Left cardiac atrium (tissue), 4 donors: ENCODE measurements at regions of chr12 and their contacts with region 1.

Region 1: GRCh38 chr12:29317556-29318363 is 63.2 kb downstream of the ERGIC2 start:
- DNase-seq: peak; percentile 58
- ATAC-seq: peak; percentile 93 to 95

Region 2: DNA sequence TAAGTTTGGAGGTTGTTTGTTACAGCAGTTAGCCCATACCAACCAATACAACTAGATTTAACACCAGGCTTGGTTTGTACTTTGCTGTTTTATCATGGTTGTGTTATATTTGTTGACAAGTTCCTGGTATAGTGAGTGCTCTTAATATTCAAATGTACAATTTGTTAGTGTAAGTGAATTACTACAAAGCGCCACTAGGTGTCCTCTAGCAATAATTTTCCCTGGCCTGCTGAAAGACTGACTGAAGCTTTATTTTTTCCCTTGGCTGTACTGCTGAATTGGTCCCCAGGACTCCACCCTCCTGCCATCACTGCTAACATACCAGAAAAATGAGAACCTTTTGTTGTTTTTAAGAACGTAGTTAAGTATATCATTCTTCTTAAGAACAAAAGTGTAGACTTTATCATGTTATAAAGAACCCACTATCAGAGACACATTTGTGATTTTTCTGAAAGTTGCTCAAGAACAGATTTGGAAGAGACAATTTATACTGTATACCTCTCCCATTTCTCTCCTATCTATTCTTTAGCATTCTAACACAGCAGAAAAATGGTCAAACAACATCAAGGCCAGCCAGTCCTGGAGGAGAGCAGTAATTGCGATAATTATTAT is 244.0 kb before region 1 on chr12:
- intact Hi-C with region 1: loop called (anchors 2 to 10 kb)
- DNase-seq: no peak
- ATAC-seq: peak; percentile 59 to 79